Aorta (tissue), 5 donors: ENCODE measurements at regions of chr4 and their contacts with region 1.

Region 1: GRCh38 chr4:146436423-146437162 is 85.1 kb downstream of the SLC10A7 start:
- DNase-seq: no peak
- ATAC-seq: no peak
- H3K4me3 ChIP-seq: no peak overlapping the region
- H3K27ac ChIP-seq: no peak overlapping the region
- H3K4me1 ChIP-seq: no peaks in the 10 kb centered on the region
- H3K27me3 ChIP-seq: no peaks in the 10 kb centered on the region

Region 2: GRCh38 chr4:145847764-145848163 is 588.8 kb before region 1 on chr4:
- intact Hi-C with region 1: loop called in 1 of 2 experiments (anchors 5 kb)
- DNase-seq: no peak
- ATAC-seq: no peak
- H3K4me3 ChIP-seq: no peak overlapping the region
- H3K27ac ChIP-seq: no peak overlapping the region
- H3K4me1 ChIP-seq: peaks cover 0 to 6% of the 10 kb centered on the region in 2 donors
- H3K27me3 ChIP-seq: no peaks in the 10 kb centered on the region

Region 3: GRCh38 chr4:146368209-146368608 is 68.4 kb before region 1 on chr4:
- intact Hi-C with region 1: no loop called
- DNase-seq: no peak
- ATAC-seq: peak; percentile 48
- H3K4me3 ChIP-seq: no peak overlapping the region
- H3K27ac ChIP-seq: no peak overlapping the region
- H3K4me1 ChIP-seq: no peaks in the 10 kb centered on the region
- H3K27me3 ChIP-seq: no peaks in the 10 kb centered on the region